Transverse colon (tissue), 4 donors: ENCODE measurements at regions of chr5 and their contacts with region 1.

Region 1: GRCh38 chr5:39080597-39081204 is 6.5 kb upstream of the RICTOR start:
- DNase-seq: peak; percentile 53
- H3K4me3 ChIP-seq: no peak overlapping the region
- H3K27ac ChIP-seq: no peak overlapping the region
- H3K4me1 ChIP-seq: peaks cover 0 to 16% (median 8%) of the 10 kb centered on the region in 4 donors
- H3K27me3 ChIP-seq: peaks cover 4% of the 10 kb centered on the region
- CTCF ChIP-seq: peak; percentile 78 to 85 (median 82)
- EP300 ChIP-seq: no peak
- POLR2A ChIP-seq: no peak

Region 2: GRCh38 chr5:38994324-38994927 is 86.3 kb before region 1 on chr5:
- in situ Hi-C with region 1: loop called in 1 of 4 experiments (anchors 10 kb)
- intact Hi-C with region 1: no loop called
- DNase-seq: peak; percentile 25
- H3K4me3 ChIP-seq: no peak overlapping the region
- H3K27ac ChIP-seq: no peak overlapping the region
- H3K4me1 ChIP-seq: no peaks in the 10 kb centered on the region
- H3K27me3 ChIP-seq: no peaks in the 10 kb centered on the region
- CTCF ChIP-seq: peak; percentile 39 to 52 (median 44)
- EP300 ChIP-seq: no peak
- POLR2A ChIP-seq: no peak

Region 3: GRCh38 chr5:39005566-39006232 is 75.0 kb before region 1 on chr5:
- in situ Hi-C with region 1: loop called in 1 of 4 experiments (anchors 10 kb)
- intact Hi-C with region 1: loop called (anchors 10 kb)
- DNase-seq: no peak
- H3K4me3 ChIP-seq: no peak overlapping the region
- H3K27ac ChIP-seq: no peak overlapping the region
- H3K4me1 ChIP-seq: no peaks in the 10 kb centered on the region
- H3K27me3 ChIP-seq: no peaks in the 10 kb centered on the region
- CTCF ChIP-seq: peak in 2 of 5 experiments; percentile 10 to 29
- EP300 ChIP-seq: no peak
- POLR2A ChIP-seq: no peak

Region 4: GRCh38 chr5:39517800-39518199 is 437.1 kb after region 1 on chr5:
- in situ Hi-C with region 1: no loop called
- intact Hi-C with region 1: no loop called
- DNase-seq: no peak
- H3K4me3 ChIP-seq: no peak overlapping the region
- H3K27ac ChIP-seq: peak overlapping the region in 1 of 4 donors; percentile 6
- H3K4me1 ChIP-seq: peaks cover 4 to 32% (median 17%) of the 10 kb centered on the region in 4 donors
- H3K27me3 ChIP-seq: no peaks in the 10 kb centered on the region
- CTCF ChIP-seq: no peak
- EP300 ChIP-seq: no peak
- POLR2A ChIP-seq: no peak